Right cardiac atrium (tissue), 5 donors: ENCODE measurements at regions of chr18 and their contacts with region 1.

Region 1: DNA sequence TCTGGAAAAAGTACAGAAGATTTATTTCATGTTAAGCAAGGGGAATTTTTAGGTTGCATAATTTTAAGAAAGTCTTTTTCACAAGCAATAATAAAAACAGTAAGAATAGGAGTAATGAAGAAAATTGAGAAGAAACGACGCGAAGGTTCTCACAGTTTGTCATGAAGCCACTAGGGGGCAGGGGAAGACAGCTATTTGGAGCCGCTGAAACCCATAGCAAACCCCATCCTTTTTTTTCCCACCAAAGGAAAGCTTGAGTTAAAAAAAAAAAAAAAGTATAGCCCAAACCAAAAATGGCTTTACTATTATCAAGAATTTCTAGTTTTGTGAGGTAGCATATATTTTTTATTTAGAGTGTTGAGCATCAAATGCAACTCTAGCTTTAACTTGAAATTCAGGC is 300.9 kb downstream of the PHLPP1 start:
- DNase-seq: no peak
- ATAC-seq: no peak
- H3K4me3 ChIP-seq: no peak overlapping the region
- H3K27ac ChIP-seq: no peak overlapping the region
- H3K4me1 ChIP-seq: no peaks in the 10 kb centered on the region
- H3K27me3 ChIP-seq: no peaks in the 10 kb centered on the region

Region 2: DNA sequence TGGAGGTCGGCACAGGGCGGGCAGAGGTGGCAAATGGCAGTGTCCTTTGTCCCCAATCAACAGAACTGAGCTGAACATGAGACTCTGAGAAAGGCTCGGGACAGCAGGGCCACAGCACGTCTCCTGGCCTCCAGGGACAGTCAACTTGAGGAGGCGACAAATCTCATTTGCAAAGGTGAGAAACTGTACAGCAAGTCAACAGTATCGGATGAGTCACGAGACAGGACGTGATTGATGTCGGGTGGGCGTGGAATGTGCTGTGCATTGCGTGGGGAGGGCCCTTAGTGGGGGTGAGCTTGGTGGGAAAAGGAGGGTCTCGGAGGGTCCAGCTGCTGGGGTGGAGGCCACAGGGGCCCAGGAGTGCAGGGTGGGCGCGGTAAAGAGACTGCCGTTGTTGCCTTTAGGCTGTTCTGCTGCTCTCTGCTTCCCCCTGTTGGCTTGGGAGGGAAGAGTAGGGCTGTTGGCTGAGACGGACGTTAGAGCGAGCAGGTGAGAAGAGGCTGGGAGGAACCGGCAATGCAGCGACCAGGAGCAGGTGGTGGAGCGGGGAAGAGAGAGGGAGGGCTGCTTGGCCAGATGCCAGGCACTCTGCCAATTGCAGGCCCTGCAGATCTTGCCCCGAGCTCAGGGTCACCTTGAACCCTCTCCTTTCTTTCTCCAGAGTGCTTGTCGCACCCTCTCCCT is 139.0 kb after region 1 on chr18:
- intact Hi-C with region 1: loop called in 3 of 4 experiments (anchors 5 to 10 kb)
- DNase-seq: peak; percentile 54 to 81 (median 78)
- ATAC-seq: peak; percentile 75 to 83
- H3K4me3 ChIP-seq: peak overlapping the region; percentile 0
- H3K27ac ChIP-seq: no peak overlapping the region
- H3K4me1 ChIP-seq: no peaks in the 10 kb centered on the region
- H3K27me3 ChIP-seq: no peaks in the 10 kb centered on the region

Region 3: DNA sequence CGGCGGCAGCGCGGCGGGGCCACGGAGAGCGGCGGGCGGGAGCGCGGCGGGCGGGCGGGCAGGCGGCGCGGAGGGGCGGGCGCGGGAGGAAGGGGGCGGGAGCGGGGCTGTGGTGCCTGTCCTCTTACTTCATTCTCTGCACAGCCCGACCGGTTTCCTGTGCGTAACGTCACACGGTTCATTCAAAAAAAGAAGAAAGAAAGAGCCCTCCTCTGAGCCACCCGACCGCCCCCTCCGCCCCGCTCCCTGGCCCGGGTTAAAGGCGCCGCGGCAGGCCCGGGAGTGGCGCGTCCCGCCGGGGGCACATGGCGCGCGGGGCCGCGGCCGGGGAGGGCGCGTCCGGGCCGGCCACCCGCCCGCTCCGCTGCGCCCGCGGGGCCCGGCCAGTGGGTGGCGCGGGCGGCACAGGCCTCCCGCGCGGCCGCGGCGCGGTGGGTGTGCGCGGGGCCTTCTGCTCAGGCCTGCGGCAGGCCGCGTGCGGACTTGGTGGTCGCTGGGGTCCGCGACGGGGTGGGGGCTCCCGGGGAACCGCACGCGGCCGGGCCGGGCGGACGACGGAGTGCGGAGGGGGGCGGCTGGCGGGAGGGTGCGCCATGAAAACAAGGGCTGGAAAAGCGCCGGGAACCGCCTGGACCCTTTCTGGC is 303.9 kb after region 1 on chr18:
- intact Hi-C with region 1: loop called (anchors 2 to 5 kb)
- DNase-seq: peak; percentile 82 to 92 (median 91)
- ATAC-seq: peak; percentile 83 to 86
- H3K4me3 ChIP-seq: peak overlapping the region; percentile 100
- H3K27ac ChIP-seq: peak overlapping the region; percentile 80
- H3K4me1 ChIP-seq: peaks cover 8% of the 10 kb centered on the region
- H3K27me3 ChIP-seq: no peaks in the 10 kb centered on the region

Region 4: DNA sequence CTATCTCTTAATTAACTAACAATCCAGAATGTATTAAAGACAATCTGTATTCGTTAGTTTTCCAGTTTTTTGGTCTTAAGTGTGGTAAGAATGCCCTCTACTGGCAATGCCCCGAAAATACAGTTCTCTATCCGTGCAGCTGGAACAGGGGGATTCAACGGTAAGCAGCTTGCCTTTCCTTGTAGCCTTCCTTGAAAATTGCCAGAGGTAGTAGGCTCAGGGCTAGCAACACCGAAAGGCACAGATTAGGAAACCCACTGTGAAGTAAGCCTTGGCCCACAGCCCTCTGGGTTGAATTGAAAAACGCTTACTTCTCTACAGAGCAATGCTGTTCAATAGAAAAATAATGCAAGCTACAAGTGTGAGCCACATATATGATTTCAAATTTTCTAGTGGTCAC is 423.1 kb after region 1 on chr18:
- intact Hi-C with region 1: loop called (anchors 5 to 10 kb)
- DNase-seq: no peak
- ATAC-seq: peak; percentile 54 to 67
- H3K4me3 ChIP-seq: no peak overlapping the region
- H3K27ac ChIP-seq: no peak overlapping the region
- H3K4me1 ChIP-seq: no peaks in the 10 kb centered on the region
- H3K27me3 ChIP-seq: no peaks in the 10 kb centered on the region

Region 5: GRCh38 chr18:63444567-63444966 is 428.3 kb after region 1 on chr18:
- intact Hi-C with region 1: loop called (anchors 5 to 10 kb)
- DNase-seq: no peak
- ATAC-seq: peak; percentile 72 to 78
- H3K4me3 ChIP-seq: no peak overlapping the region
- H3K27ac ChIP-seq: peak overlapping the region; percentile 76
- H3K4me1 ChIP-seq: no peaks in the 10 kb centered on the region
- H3K27me3 ChIP-seq: no peaks in the 10 kb centered on the region